Activated CD4-positive, alpha-beta memory T cell treated with anti-CD3 and anti-CD28 coated beads, Interleukin-2, amount 10 ng/mL, durations not matched to agents 7 days and 5 days (primary cell): ENCODE measurements at regions of chr12 and their contacts with region 1.

Region 1: DNA sequence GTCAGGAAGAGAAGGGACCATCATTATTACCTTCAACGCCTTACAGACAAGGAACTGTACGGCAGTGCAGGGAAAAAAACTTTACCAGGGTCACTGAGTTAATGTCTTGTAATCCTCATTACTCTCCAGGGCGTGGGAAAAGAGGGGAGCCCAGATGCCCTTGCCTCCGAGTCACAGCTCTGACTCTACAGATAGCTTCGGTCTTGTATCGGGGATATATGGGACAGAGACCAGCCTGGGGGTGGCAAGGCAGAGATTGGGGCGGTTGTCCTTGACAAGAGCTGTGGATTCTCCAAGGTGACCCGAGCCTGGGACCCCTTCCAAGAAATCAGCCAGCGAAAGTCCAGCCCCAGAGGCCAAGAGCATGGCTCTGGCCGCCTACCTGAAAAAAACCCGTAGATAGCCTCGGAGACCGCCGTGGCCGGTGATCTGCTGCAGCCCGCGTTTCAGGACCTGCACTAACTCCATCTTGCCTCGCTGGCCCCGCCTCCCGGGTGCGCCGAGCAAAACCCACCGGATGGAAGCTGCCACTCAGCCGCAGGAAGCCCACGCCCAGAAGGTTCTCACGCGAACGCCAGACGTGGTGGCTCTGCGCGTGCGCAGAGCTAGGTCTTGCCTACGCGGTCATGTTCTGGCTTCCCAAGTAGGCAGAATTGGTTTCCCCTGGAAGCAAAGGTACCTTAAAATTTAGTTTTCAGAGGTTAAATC is at the start of gene NDUFA12:
- DNase-seq: peak; percentile 95
- H3K4me3 Mint-ChIP-seq: peak within 1 kb of the TSS; percentile 87
- H3K27ac Mint-ChIP-seq: peak within 1 kb of the TSS; percentile 77
- H3K4me1 Mint-ChIP-seq: peaks cover 56% of the 10 kb centered on the region
- H3K27me3 Mint-ChIP-seq: no peaks in the 10 kb centered on the region
- total RNA-seq, gene NDUFA12: 155 to 167 TPM

Region 2: DNA sequence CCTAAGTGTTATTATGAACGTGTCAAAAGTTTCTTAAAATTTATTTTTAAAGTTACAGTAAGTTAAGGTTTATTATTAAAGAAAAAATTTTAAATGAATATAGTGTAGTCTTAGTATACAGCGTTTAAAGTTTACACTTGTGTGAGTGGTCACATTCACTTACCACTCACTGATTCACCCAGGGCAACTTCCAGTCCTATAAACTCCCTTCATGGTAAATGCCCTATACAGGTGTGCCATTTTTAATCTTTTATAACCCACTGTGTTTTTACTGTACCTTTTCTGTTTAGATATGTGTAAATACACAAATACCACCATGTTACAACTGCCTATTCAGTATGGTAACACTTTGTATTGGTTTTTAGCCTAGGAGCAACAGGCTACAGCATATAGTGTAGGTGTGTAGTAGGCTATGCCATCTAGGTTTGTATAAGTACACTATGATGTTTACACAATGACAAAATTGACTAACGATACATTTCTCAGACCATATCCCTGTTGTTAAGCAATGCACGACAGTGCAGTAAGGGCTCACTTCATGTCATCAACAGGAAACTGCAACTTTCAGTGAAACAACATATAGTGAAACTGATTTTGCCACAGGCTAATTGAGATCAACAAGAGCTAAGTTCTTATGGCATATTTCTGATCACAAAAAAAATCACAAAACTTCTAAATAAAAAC is 241.0 kb before region 1 on chr12:
- CTCF ChIA-PET with region 1: no interaction called
- POLR2A ChIA-PET with region 1: no interaction called
- DNase-seq: no peak
- H3K4me3 Mint-ChIP-seq: no peak overlapping the region
- H3K27ac Mint-ChIP-seq: no peak overlapping the region
- H3K4me1 Mint-ChIP-seq: peaks cover 15% of the 10 kb centered on the region
- H3K27me3 Mint-ChIP-seq: peaks cover 12% of the 10 kb centered on the region

Region 3: DNA sequence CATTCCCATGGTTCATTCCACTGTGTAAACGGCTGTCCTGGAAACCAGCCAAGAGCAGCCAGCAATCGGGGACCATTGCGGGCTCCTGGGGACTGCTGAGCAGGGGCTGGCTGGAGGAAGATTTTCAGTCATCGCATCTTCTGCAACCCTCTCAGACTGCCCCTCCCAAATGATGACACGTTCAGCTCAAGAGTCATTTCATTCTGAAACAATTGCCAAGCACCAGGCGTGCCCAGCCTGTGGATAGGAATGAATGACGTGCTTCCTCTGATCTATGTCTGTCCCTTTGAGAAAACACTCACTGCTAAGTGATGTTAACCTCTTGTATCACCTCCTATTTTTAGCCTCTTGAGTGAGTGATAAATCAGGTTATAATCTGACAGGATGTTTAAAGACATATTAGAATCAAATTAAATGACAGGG is 61.9 kb before region 1 on chr12:
- CTCF ChIA-PET with region 1: interaction called, 4 read pairs
- POLR2A ChIA-PET with region 1: interaction called, 32 read pairs
- DNase-seq: peak; percentile 80
- H3K4me3 Mint-ChIP-seq: peak overlapping the region; percentile 21
- H3K27ac Mint-ChIP-seq: peak overlapping the region; percentile 81
- H3K4me1 Mint-ChIP-seq: peaks cover 58% of the 10 kb centered on the region
- H3K27me3 Mint-ChIP-seq: no peaks in the 10 kb centered on the region

Region 4: GRCh38 chr12:94988471-94988870 is 14.9 kb before region 1 on chr12:
- CTCF ChIA-PET with region 1: interaction called, 4 read pairs
- POLR2A ChIA-PET with region 1: interaction called, 48 read pairs
- DNase-seq: no peak
- H3K4me3 Mint-ChIP-seq: no peak overlapping the region
- H3K27ac Mint-ChIP-seq: peak overlapping the region; percentile 54
- H3K4me1 Mint-ChIP-seq: peaks cover 42% of the 10 kb centered on the region
- H3K27me3 Mint-ChIP-seq: no peaks in the 10 kb centered on the region

Region 5: DNA sequence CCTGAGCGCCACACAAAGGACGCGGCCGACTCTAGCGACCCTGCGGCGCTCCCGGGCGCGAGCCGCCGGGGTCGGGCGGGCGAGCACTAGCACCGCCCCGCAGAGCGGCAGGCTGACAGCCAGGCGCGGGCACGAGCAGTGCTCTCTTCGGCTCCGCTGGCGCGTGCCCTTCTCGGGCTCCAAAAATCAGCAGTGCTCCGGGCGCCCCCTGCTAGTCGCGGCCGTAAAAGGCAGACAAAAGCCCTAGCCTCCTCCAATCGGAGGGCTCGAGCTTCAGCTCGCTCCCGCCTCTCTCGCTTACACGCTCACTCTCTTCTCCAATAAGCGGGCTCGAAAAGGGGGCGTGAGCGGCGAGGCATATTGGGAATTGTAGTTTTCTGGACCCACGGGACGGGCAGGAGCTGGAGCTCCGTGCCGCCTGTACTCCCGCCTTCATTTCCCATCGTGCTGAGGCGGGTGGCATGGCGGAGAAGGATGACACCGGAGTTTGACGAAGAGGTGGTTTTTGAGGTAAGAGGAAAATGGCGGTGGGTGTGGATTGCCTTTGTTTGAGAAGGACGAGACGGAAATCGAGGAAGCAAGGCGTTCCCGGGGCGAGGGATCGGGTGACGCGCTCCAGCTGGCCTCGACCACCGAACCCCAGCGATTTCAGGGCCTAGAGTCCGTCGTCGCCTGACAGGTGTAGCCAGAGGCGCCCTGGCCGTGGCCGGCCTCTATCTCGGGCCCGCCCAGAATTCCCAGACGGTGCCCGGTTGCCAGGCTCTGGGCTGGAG is 214.2 kb after region 1 on chr12 and contains the starts of genes FGD6 and VEZT:
- CTCF ChIA-PET with region 1: interaction called, 3 read pairs
- POLR2A ChIA-PET with region 1: interaction called, 13 read pairs
- DNase-seq: peak; percentile 99
- H3K4me3 Mint-ChIP-seq: peak within 1 kb of the TSS; percentile 89
- H3K27ac Mint-ChIP-seq: peak within 1 kb of the TSS; percentile 89
- H3K4me1 Mint-ChIP-seq: peaks cover 22% of the 10 kb centered on the region
- H3K27me3 Mint-ChIP-seq: peaks cover 8% of the 10 kb centered on the region
- total RNA-seq, gene FGD6: 0.45 to 0.71 TPM
- total RNA-seq, gene VEZT: 35.7 to 38.4 TPM